Activated naive CD4-positive, alpha-beta T cell treated with anti-CD3 and anti-CD28 coated beads for 36 hours (primary cell): ENCODE measurements at regions of chr5 and their contacts with region 1.

Region 1: DNA sequence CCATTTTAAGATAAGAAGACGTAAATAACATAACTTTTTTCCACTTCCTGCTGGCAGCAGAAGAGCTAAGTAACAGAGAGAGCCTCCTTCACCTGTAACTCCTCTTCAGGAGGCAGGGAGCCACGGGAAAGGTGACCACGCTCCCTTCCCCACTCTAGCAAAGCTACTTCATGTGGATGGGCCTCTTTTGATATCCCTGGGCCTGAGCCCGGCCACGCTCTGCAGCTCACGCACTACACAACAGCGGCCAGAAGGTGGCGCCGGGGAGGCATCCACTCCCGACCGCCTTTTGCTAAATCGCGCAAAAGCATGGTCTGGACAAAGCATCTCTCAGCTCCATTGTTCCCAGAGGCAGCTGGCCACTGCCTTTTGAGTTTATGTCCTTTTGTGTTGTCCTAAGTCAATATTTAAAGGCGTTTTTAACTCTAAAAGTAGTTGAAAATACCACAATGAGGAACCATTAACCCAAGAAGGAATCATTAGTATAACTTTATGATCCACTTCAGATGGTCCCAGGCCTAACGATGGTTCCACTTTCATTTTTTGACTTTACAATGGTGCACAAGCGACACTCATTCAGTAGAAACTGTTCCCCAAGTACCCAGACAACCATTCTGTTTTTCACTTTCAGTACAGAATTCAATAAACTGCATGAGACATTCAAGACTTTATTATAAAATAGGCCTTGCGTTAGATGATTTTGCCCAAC is 23.6 kb downstream of the CMBL start:
- DNase-seq: peak; percentile 82
- H3K4me3 Mint-ChIP-seq: no peak overlapping the region
- H3K27ac Mint-ChIP-seq: no peak overlapping the region
- H3K4me1 Mint-ChIP-seq: peaks cover 7% of the 10 kb centered on the region
- H3K27me3 Mint-ChIP-seq: peaks cover 2% of the 10 kb centered on the region

Region 2: GRCh38 chr5:10262121-10262774 is 21.8 kb before region 1 on chr5:
- CTCF ChIA-PET with region 1: interaction called, 16 read pairs
- intact Hi-C with region 1: no loop called
- DNase-seq: no peak
- H3K4me3 Mint-ChIP-seq: no peak overlapping the region
- H3K27ac Mint-ChIP-seq: no peak overlapping the region
- H3K4me1 Mint-ChIP-seq: peaks cover 15% of the 10 kb centered on the region
- H3K27me3 Mint-ChIP-seq: no peaks in the 10 kb centered on the region

Region 3: GRCh38 chr5:10364186-10364683 is 80.2 kb after region 1 on chr5:
- CTCF ChIA-PET with region 1: interaction called, 9 read pairs
- intact Hi-C with region 1: loop called (anchors 1 kb)
- DNase-seq: no peak
- H3K4me3 Mint-ChIP-seq: no peak overlapping the region
- H3K27ac Mint-ChIP-seq: no peak overlapping the region
- H3K4me1 Mint-ChIP-seq: peaks cover 72% of the 10 kb centered on the region
- H3K27me3 Mint-ChIP-seq: no peaks in the 10 kb centered on the region

Region 4: GRCh38 chr5:10424124-10424731 is 140.1 kb after region 1 on chr5:
- CTCF ChIA-PET with region 1: interaction called, 29 read pairs
- intact Hi-C with region 1: loop called (anchors 1 kb)
- DNase-seq: peak; percentile 43
- H3K4me3 Mint-ChIP-seq: no peak overlapping the region
- H3K27ac Mint-ChIP-seq: no peak overlapping the region
- H3K4me1 Mint-ChIP-seq: peaks cover 35% of the 10 kb centered on the region
- H3K27me3 Mint-ChIP-seq: no peaks in the 10 kb centered on the region

Region 5: GRCh38 chr5:10689391-10690081 is 405.5 kb after region 1 on chr5:
- CTCF ChIA-PET with region 1: no interaction called
- intact Hi-C with region 1: loop called (anchors 1 kb)
- DNase-seq: peak; percentile 57
- H3K4me3 Mint-ChIP-seq: no peak overlapping the region
- H3K27ac Mint-ChIP-seq: no peak overlapping the region
- H3K4me1 Mint-ChIP-seq: no peaks in the 10 kb centered on the region
- H3K27me3 Mint-ChIP-seq: no peaks in the 10 kb centered on the region